MCF 10A (cell line): ENCODE measurements at regions of chr3 and their contacts with region 1.

Region 1: DNA sequence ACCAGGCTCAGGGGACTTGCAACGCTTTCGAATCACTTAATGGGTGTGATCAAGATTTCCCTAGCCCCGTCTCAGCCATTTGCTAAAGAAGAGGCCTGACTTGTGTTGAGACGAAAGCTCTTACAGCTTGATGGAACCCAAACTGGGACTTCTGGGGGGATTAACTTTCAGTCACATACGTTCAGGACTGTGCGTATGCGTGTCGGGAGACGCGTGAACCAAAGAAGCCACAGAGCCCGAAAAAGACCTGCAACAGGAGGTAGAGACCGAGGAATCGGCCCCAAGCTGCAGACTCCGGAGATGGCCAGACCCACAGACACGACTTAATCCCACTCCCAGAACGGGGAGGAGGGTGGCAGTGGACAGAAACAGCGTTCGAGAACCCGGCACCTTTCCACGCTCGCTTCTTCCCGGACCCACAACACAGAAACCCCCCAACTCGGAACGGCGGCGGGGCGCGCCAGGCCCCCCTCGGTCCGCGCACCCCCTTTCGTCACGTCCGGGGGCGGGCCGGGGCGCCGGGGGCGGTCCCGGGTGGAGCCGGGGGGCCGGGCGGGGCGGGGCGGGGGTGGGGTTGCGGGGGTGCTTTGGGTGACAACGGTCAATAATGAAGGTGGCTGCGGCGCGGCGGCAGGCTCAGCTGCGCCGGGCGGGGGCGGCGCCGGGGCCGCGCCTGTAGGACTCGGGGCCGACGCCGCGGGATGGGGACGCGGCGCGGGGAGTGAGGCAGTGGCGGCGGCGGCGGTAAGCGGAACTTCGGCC is at the start of gene ATP11B:
- DNase-seq: peak; percentile 62
- H3K4me3 Mint-ChIP-seq: peak within 1 kb of the TSS; percentile 92
- H3K27ac Mint-ChIP-seq: peak within 1 kb of the TSS; percentile 93
- H3K4me1 Mint-ChIP-seq: peaks cover 22% of the 10 kb centered on the region
- H3K27me3 Mint-ChIP-seq: no peaks in the 10 kb centered on the region
- CTCF ChIP-seq: no peak
- total RNA-seq, gene ATP11B: 66.2 and 69.9 TPM in 2 replicates

Region 2: DNA sequence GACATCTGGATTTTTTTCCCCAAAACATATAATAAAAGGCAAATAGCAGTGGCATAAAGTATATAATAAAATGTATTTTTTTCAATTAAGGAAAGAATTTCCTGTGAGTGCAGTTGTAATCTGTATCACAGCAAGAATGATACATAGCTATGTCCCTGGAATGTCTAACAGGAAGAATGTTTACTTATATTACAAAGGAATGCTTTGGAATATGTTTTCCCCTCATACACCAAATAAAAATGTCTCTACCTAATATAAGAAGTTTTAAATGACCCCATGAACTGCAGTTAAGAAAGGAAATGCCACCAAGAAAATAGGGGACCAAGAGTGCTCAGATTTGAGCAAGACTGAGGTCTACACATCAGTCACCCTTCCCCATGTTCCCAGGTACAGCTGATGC is 37.8 kb before region 1 on chr3:
- CTCF ChIA-PET with region 1: interaction called, 3 read pairs
- POLR2A ChIA-PET with region 1: interaction called, 11 read pairs
- intact Hi-C with region 1: no loop called
- DNase-seq: no peak
- H3K4me3 Mint-ChIP-seq: no peak overlapping the region
- H3K27ac Mint-ChIP-seq: no peak overlapping the region
- H3K4me1 Mint-ChIP-seq: peaks cover 7% of the 10 kb centered on the region
- H3K27me3 Mint-ChIP-seq: no peaks in the 10 kb centered on the region
- CTCF ChIP-seq: no peak

Region 3: GRCh38 chr3:182810574-182811268 is 17.6 kb after region 1 on chr3:
- CTCF ChIA-PET with region 1: interaction called, 3 read pairs
- POLR2A ChIA-PET with region 1: interaction called, 42 read pairs
- intact Hi-C with region 1: no loop called
- DNase-seq: no peak
- H3K4me3 Mint-ChIP-seq: no peak overlapping the region
- H3K27ac Mint-ChIP-seq: no peak overlapping the region
- H3K4me1 Mint-ChIP-seq: peaks cover 11% of the 10 kb centered on the region
- H3K27me3 Mint-ChIP-seq: no peaks in the 10 kb centered on the region
- CTCF ChIP-seq: no peak

Region 4: GRCh38 chr3:182829761-182830405 is 36.8 kb after region 1 on chr3:
- CTCF ChIA-PET with region 1: no interaction called
- POLR2A ChIA-PET with region 1: interaction called, 33 read pairs
- intact Hi-C with region 1: loop called (anchors 5 kb)
- DNase-seq: peak; percentile 9
- H3K4me3 Mint-ChIP-seq: no peak overlapping the region
- H3K27ac Mint-ChIP-seq: no peak overlapping the region
- H3K4me1 Mint-ChIP-seq: no peaks in the 10 kb centered on the region
- H3K27me3 Mint-ChIP-seq: no peaks in the 10 kb centered on the region
- CTCF ChIP-seq: no peak

Region 5: DNA sequence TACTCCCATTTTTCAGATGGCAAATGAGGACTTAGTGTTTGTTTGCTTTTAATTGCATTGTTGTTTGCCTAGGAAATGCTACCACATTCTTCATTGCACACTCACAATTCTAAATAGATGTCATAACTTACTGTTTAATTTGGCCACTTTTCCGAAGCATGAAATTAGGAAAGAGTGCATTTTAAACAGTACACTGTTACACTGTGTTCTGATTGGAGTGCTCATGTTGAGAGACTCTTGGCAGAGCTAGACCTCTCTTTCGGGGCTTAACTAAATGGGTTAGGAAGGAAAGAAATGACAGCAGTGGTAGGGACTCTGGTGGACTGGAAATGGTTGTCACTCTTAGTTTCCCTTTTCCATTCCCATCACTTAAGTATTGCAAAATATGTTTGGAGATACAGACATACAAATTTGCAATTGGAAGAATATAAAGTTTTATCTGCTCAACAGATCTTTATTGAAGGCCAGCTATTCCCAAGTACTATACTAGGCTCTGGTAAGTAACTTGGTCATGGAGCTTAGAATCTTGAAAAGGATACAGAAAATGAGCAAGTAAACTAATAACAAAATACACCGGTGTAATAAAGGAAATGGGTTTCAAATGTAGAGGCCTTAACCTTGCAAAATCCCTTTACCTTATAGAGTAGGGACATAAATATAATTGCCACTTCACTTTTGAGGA is 97.0 kb after region 1 on chr3:
- CTCF ChIA-PET with region 1: no interaction called
- POLR2A ChIA-PET with region 1: no interaction called
- intact Hi-C with region 1: no loop called
- DNase-seq: peak; percentile 56
- H3K4me3 Mint-ChIP-seq: no peak overlapping the region
- H3K27ac Mint-ChIP-seq: no peak overlapping the region
- H3K4me1 Mint-ChIP-seq: no peaks in the 10 kb centered on the region
- H3K27me3 Mint-ChIP-seq: no peaks in the 10 kb centered on the region
- CTCF ChIP-seq: no peak